Transverse colon (tissue), 4 donors: ENCODE measurements at regions of chr17 and their contacts with region 1.

Region 1: GRCh38 chr17:7912927-7913524 is 3.1 kb downstream of the RNF227 start:
- DNase-seq: no peak
- H3K4me3 ChIP-seq: no peak overlapping the region
- H3K27ac ChIP-seq: peak overlapping the region in 1 of 4 donors; percentile 34
- H3K4me1 ChIP-seq: peaks cover 6 to 27% (median 20%) of the 10 kb centered on the region in 4 donors
- H3K27me3 ChIP-seq: no peaks in the 10 kb centered on the region
- CTCF ChIP-seq: peak; percentile 63 to 78 (median 72)
- EP300 ChIP-seq: no peak
- POLR2A ChIP-seq: no peak

Region 2: DNA sequence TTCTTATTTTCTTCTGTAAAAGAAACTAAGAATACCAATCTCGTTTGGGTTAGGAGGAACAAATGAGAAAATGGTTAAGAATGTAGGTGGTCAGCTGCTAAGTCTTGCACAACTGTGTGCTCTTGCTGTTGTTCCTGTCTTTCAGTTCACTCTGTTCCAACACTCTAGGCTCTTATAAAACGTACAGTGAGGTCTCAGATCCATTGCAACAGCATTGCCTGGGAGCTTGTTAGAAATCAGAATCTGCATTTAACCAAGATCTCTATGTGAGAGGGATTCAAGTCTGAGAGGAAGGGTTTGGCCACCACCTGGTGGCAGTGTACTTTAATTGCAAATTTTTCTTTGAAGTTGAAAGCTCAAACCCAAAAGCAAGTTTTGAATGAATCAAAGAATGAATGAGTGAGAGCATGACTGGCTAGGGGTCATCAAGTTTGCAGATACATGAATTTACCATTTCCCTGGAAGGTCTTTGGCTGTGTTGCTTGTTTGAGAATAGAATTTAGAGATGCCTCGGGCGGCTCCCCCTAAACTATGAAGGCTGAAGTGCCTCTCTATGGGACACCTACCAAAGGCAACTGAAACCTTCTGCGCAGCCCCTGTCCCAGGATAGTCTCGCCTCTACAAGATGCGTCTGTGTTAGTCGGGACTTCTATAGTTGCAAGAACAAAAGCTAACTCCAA is 128.4 kb after region 1 on chr17:
- in situ Hi-C with region 1: loop called in 1 of 4 experiments (anchors 5 kb)
- intact Hi-C with region 1: no loop called
- DNase-seq: peak; percentile 56
- H3K4me3 ChIP-seq: no peak overlapping the region
- H3K27ac ChIP-seq: peak overlapping the region; percentile 14 to 65 (median 52)
- H3K4me1 ChIP-seq: peaks cover 0 to 12% (median 10%) of the 10 kb centered on the region in 4 donors
- H3K27me3 ChIP-seq: peaks cover 31% of the 10 kb centered on the region
- CTCF ChIP-seq: peak; percentile 40 to 72 (median 48)
- EP300 ChIP-seq: no peak
- POLR2A ChIP-seq: no peak

Region 3: GRCh38 chr17:8204761-8205555 is 291.9 kb after region 1 on chr17:
- in situ Hi-C with region 1: no loop called
- intact Hi-C with region 1: no loop called
- DNase-seq: no peak
- H3K4me3 ChIP-seq: no peak overlapping the region
- H3K27ac ChIP-seq: no peak overlapping the region
- H3K4me1 ChIP-seq: peaks cover 3 to 12% (median 3%) of the 10 kb centered on the region in 4 donors
- H3K27me3 ChIP-seq: no peaks in the 10 kb centered on the region
- CTCF ChIP-seq: no peak
- EP300 ChIP-seq: no peak
- POLR2A ChIP-seq: no peak